ENCODE measurements at regions of chr3 and their contacts with region 1.

Region 1: GRCh38 chr3:194592798-194593752 is 40.1 kb downstream of the TMEM44 start:
- DNase-seq: no peak
- H3K4me3 ChIP-seq: no peak overlapping the region
- H3K27ac ChIP-seq: no peak overlapping the region
- H3K27me3 ChIP-seq: no peaks in the 10 kb centered on the region
- CTCF ChIP-seq: no peak

Region 2: DNA sequence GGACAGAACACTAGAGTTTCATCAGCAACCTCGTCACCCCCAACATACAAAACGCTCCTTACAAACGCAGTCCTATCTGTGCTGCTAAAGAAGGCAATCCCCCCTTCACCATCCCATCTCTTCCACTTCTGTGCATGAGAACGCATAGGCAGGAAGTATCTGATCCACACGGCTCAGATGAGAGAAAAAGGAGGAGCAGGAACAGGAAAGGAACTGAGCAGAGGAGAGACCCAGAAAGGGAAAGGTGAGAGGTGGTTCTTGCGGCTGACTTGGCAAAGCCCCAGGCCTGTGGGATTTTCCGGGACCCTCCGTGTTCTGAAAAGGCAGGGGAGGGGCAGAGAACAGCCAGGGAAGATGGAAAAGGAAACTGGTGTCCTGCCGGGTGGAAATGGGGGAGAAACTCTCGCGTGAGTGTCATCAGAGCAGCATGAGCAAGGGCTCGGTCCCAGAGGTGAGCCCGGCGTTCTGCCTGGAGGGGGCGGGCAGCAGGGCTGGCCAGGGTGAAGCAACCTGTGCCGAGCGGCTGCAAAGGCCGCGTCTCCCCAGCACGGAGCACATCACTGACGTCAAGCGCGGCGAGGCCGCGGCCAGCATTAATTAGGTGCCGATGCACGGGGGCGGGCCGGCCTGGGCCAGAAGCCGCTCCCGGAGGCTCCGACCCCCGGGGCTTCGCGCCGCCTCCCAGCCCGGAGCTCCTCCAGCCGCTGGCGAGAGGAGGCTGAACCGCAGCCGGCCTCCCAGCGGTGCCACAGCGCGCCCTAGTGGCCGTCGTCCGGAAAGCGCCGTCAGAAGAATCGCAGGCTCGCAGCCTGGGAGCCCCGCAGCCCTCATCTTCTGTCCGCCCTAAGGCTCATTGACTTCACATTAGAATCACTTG is 277.7 kb before region 1 on chr3:
- intact Hi-C with region 1: no loop called
- DNase-seq: peak; percentile 70 to 92 (median 80)
- H3K4me3 ChIP-seq: peak overlapping the region; percentile 36 to 81 (median 66)
- H3K27ac ChIP-seq: peak overlapping the region in 27 of 59 donors; percentile 2 to 81 (median 42)
- H3K27me3 ChIP-seq: peaks cover 0 to 19% (median 0%) of the 10 kb centered on the region in 45 donors
- CTCF ChIP-seq: peak in 55 of 56 donors; percentile 86 to 99 (median 97)

Region 3: DNA sequence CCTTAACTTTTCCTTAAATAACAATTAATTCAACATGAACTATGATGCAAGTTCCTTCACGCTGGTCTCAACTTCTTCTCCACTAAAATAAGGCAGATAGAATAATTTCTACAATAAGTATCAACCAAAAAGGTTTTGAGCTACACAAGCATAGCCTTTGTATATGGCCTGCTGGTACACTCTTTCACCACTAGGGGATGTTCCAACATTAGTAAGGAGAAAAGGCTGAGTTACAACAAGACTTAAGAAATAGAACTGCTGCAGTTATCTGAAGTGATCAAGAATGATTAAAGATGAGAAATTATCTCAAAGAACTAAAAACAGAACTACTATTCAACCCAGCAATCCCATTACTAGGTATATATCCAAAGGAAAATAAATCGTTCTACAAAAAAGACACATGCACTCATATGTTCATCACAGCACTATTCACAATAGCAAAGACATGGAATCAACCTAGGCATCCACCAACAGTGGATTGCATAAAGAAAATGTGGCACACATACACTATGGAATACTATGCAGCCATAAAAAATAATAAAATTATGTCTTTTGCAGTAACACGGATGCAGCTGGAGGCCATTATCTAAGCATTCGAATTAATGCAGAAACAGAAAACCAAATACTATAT is 120.7 kb before region 1 on chr3:
- intact Hi-C with region 1: loop called (anchors 2 to 5 kb)
- DNase-seq: peak in 1 of 10 donors; percentile 23
- H3K4me3 ChIP-seq: no peak overlapping the region
- H3K27ac ChIP-seq: no peak overlapping the region
- H3K27me3 ChIP-seq: no peaks in the 10 kb centered on the region
- CTCF ChIP-seq: peak; percentile 89 to 99 (median 95)

Region 4: GRCh38 chr3:194548346-194549321 is 44.4 kb before region 1 on chr3:
- intact Hi-C with region 1: no loop called
- DNase-seq: no peak
- H3K4me3 ChIP-seq: no peak overlapping the region
- H3K27ac ChIP-seq: peak overlapping the region in 8 of 59 donors; percentile 7 to 47 (median 31)
- H3K27me3 ChIP-seq: no peaks in the 10 kb centered on the region
- CTCF ChIP-seq: no peak

Region 5: DNA sequence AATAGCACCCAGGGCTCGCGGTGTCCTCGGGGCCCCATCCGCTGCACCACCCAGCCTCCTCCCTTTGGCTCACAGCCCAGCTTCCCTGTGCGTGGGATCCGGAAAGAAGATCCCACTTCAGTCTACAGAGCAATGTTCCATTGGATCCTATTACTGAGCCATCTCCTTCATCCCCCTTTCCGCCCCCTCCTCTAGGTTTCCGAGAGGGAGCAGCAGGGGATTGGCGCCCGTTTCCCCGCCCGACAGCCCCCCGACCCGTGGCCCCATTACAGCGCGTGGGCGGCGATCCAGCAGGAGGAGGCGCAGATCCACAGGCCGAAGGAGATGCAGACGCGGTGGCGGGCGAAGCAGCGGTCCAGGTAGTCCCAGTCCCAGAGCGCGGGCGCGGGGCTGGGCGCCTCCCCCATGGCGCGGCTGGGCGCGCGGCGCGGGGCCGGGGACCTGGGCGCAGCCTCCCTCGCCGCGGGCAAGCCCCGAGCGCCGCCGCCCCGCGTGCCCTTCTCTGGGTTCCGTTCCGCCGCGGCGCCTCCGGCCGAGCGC is 39.8 kb after region 1 on chr3:
- intact Hi-C with region 1: no loop called
- DNase-seq: no peak
- H3K4me3 ChIP-seq: peak overlapping the region; percentile 43 to 78 (median 66)
- H3K27ac ChIP-seq: peak overlapping the region in 20 of 59 donors; percentile 6 to 76 (median 49)
- H3K27me3 ChIP-seq: no peaks in the 10 kb centered on the region
- CTCF ChIP-seq: no peak